Heart left ventricle (tissue), 16 donors: ENCODE measurements at regions of chr9 and their contacts with region 1.

Region 1: GRCh38 chr9:69131682-69132081 is 42.4 kb upstream of the TJP2 start:
- DNase-seq: no peak
- ATAC-seq: peak; percentile 31 to 72 (median 48)
- H3K4me3 ChIP-seq: no peak overlapping the region
- H3K27ac ChIP-seq: peak overlapping the region in 10 of 12 donors; percentile 55 to 85 (median 72)
- H3K4me1 ChIP-seq: peaks cover 3 to 71% (median 29%) of the 10 kb centered on the region in 12 donors
- H3K27me3 ChIP-seq: no peaks in the 10 kb centered on the region
- CTCF ChIP-seq: no peak
- POLR2A ChIP-seq: no peak

Region 2: GRCh38 chr9:69085569-69086283 is 46.0 kb before region 1 on chr9:
- intact Hi-C with region 1: loop called in 1 of 10 experiments (anchors 10 kb)
- DNase-seq: peak in 1 of 5 donors; percentile 24
- ATAC-seq: peak; percentile 72 to 77 (median 74)
- H3K4me3 ChIP-seq: no peak overlapping the region
- H3K27ac ChIP-seq: peak overlapping the region in 7 of 12 donors; percentile 0 to 61 (median 39)
- H3K4me1 ChIP-seq: peaks cover 0 to 33% (median 11%) of the 10 kb centered on the region in 12 donors
- H3K27me3 ChIP-seq: no peaks in the 10 kb centered on the region
- CTCF ChIP-seq: no peak
- POLR2A ChIP-seq: no peak

Region 3: GRCh38 chr9:69295872-69296552 is 164.3 kb after region 1 on chr9:
- intact Hi-C with region 1: no loop called
- DNase-seq: peak in 4 of 5 donors; percentile 43 to 61 (median 54)
- ATAC-seq: peak; percentile 44 to 82 (median 78)
- H3K4me3 ChIP-seq: no peak overlapping the region
- H3K27ac ChIP-seq: peak overlapping the region in 10 of 12 donors; percentile 27 to 77 (median 56)
- H3K4me1 ChIP-seq: peaks cover 0 to 25% (median 8%) of the 10 kb centered on the region in 12 donors
- H3K27me3 ChIP-seq: no peaks in the 10 kb centered on the region
- CTCF ChIP-seq: no peak
- POLR2A ChIP-seq: no peak